Activated T-helper 2 cell treated with anti-CD3 and anti-CD28 coated beads, Interferon-gamma antibody, Interleukin-2, Interleukin-4, amounts not matched to agents 10 μg/mL and 5 μg/mL and 100 μg/mL, durations not matched to agents 14 hours and 24 hours and 36 hours (primary cell): ENCODE measurements at regions of chr7 and their contacts with region 1.

Region 1: DNA sequence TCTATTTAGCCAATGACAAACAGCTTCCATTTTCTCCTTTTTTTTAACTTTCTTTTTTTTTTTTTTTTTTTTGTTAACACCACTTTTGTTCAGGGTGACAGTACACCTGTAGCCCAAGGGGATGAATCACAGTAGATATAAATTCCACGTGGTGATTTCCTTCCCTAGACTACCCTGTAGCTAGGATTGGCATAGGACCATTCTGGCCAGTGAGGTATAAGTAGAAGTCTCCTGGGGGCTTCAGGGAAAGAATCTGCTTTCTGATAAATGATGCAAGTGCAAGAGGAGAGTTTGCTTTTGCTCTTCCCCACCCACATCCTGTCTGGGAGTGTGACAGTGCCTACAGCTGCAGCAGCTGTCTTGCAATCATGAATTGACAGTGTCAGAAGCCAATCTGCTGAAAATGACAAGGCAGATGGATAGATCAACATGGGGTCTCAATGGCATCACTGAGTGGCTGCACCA is 63.2 kb upstream of the TOMM7 start:
- DNase-seq: peak; percentile 61
- H3K4me3 Mint-ChIP-seq: peak overlapping the region; percentile 65
- H3K27ac Mint-ChIP-seq: peak overlapping the region; percentile 97
- H3K4me1 Mint-ChIP-seq: peaks cover 44% of the 10 kb centered on the region
- H3K27me3 Mint-ChIP-seq: no peaks in the 10 kb centered on the region

Region 2: DNA sequence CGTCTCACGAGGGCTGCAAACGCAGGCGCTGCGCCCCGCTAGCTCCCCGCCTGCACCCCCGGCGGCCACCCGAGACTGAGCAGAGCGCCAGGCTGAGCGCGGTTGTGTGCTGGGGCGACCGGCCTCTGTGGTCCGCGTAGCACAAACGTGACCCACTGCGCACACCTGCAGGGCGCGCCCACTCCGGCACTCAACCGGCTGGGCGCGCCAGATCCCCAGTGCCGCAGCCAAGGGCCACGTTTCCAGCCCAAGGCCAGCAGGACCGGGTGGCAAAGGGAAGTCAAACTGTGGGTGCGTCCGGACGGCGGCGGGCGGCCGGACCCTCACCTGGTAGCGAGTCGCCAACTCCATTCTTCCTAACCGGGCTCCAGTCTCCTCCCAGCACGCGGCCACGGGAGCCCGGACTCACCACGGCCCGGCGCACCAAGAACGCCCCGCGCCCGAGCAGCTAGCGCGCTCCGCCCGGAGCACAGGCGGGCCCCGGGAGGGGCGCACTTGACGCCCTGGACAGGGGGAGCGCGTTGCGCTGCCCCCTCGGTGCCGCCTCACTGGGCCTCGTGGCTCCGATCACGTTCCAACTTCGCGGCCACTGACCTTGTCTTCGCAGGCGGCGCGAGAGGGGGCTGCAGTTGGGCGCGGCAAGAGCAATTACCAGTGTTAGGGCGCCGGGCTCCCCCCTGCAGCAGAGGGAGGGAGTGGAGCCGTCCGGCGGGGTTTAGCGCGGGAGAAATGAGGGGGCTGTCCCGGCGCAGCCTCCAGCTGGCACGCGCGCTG is 940.2 kb before region 1 on chr7 and contains the start of gene CDCA7L:
- intact Hi-C with region 1: loop called (anchors 10 kb)
- DNase-seq: peak; percentile 67
- H3K4me3 Mint-ChIP-seq: peak within 1 kb of the TSS; percentile 91
- H3K27ac Mint-ChIP-seq: peak within 1 kb of the TSS; percentile 85
- H3K4me1 Mint-ChIP-seq: peaks cover 62% of the 10 kb centered on the region
- H3K27me3 Mint-ChIP-seq: peaks cover 6% of the 10 kb centered on the region
- total RNA-seq, gene CDCA7L: 81.5 and 82.9 TPM in 2 replicates

Region 3: GRCh38 chr7:22822486-22823141 is 63.2 kb before region 1 on chr7 and contains the start of gene TOMM7:
- intact Hi-C with region 1: loop called (anchors 2 kb)
- DNase-seq: peak; percentile 84
- H3K4me3 Mint-ChIP-seq: peak within 1 kb of the TSS; percentile 97
- H3K27ac Mint-ChIP-seq: peak within 1 kb of the TSS; percentile 93
- H3K4me1 Mint-ChIP-seq: peaks cover 31% of the 10 kb centered on the region
- H3K27me3 Mint-ChIP-seq: peaks cover 14% of the 10 kb centered on the region
- total RNA-seq, gene TOMM7: 216 and 221 TPM in 2 replicates

Region 4: GRCh38 chr7:22911889-22912288 is 26.1 kb after region 1 on chr7:
- intact Hi-C with region 1: no loop called
- DNase-seq: no peak
- H3K4me3 Mint-ChIP-seq: no peak overlapping the region
- H3K27ac Mint-ChIP-seq: no peak overlapping the region
- H3K4me1 Mint-ChIP-seq: no peaks in the 10 kb centered on the region
- H3K27me3 Mint-ChIP-seq: no peaks in the 10 kb centered on the region

Region 5: GRCh38 chr7:22934473-22935065 is 48.7 kb after region 1 on chr7:
- intact Hi-C with region 1: loop called (anchors 5 kb)
- DNase-seq: no peak
- H3K4me3 Mint-ChIP-seq: no peak overlapping the region
- H3K27ac Mint-ChIP-seq: no peak overlapping the region
- H3K4me1 Mint-ChIP-seq: no peaks in the 10 kb centered on the region
- H3K27me3 Mint-ChIP-seq: peaks cover 5% of the 10 kb centered on the region

Region 6: DNA sequence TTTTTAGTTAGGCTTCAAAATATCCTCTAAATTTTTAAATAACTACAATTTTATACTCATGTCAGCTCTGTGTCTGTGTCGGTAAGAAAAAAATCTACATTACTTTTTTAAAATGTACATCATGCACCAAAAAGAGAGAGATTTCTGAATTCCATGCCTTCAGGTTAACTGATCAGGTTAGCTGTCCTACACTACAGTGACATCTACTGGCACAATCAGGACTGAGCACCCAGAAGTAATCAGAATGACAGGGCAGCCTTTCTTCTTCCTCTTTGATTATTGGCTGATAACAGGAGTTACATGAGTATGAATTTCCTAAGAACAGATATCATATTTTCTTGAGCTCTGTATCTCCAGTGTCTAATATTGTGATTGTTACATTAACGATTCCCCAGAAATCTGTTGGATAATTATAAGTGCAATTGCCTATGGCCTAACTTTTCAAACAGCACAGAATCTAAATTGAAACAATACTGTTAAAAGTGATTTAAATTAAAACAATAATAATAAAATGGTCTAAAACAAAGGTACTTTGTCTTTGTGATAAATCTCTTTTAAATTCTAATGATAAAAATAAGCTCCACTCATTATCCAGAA is 169.9 kb after region 1 on chr7:
- intact Hi-C with region 1: loop called (anchors 1 kb)
- DNase-seq: peak; percentile 46
- H3K4me3 Mint-ChIP-seq: no peak overlapping the region
- H3K27ac Mint-ChIP-seq: no peak overlapping the region
- H3K4me1 Mint-ChIP-seq: peaks cover 10% of the 10 kb centered on the region
- H3K27me3 Mint-ChIP-seq: peaks cover 3% of the 10 kb centered on the region